A673 (cell line): ENCODE measurements at regions of chr5 and their contacts with region 1.

Region 1: DNA sequence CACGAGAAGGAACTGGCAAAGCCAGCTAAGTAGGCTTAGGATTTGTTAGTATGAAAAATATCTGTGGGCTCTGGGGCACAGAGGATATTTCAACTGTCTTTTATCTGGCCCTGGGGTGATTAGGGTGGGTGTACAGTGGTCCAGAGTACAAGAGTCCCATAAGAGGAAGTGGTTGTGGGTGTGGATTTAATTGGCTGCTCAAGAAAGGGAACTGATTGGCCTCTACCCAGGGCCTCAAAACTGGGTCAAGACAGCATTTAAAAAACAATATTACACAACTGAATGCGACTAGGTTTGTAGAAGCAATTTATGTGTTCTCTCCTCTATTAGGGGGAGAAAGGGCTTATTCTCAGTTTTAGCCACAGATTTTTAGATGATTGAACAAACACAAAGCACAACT is 1353.4 kb upstream of the WWC1 start:
- DNase-seq: no peak
- H3K4me3 ChIP-seq: no peak overlapping the region
- H3K27ac ChIP-seq: no peak overlapping the region
- H3K4me1 ChIP-seq: no peaks in the 10 kb centered on the region
- H3K27me3 ChIP-seq: no peaks in the 10 kb centered on the region
- CTCF ChIP-seq: no peak

Region 2: GRCh38 chr5:166772770-166773169 is 165.3 kb before region 1 on chr5:
- CTCF ChIA-PET with region 1: no interaction called
- POLR2A ChIA-PET with region 1: no interaction called
- intact Hi-C with region 1: no loop called
- DNase-seq: no peak
- H3K4me3 ChIP-seq: no peak overlapping the region
- H3K27ac ChIP-seq: no peak overlapping the region
- H3K4me1 ChIP-seq: no peaks in the 10 kb centered on the region
- H3K27me3 ChIP-seq: no peaks in the 10 kb centered on the region
- CTCF ChIP-seq: no peak

Region 3: GRCh38 chr5:166926138-166926537 is 11.9 kb before region 1 on chr5:
- CTCF ChIA-PET with region 1: no interaction called
- POLR2A ChIA-PET with region 1: interaction called, 16 read pairs
- intact Hi-C with region 1: no loop called
- DNase-seq: peak; percentile 20
- H3K4me3 ChIP-seq: peak overlapping the region; percentile 19
- H3K27ac ChIP-seq: no peak overlapping the region
- H3K4me1 ChIP-seq: no peaks in the 10 kb centered on the region
- H3K27me3 ChIP-seq: peaks cover 7% of the 10 kb centered on the region
- CTCF ChIP-seq: no peak

Region 4: GRCh38 chr5:167592114-167592513 is 654.0 kb after region 1 on chr5:
- CTCF ChIA-PET with region 1: no interaction called
- POLR2A ChIA-PET with region 1: no interaction called
- intact Hi-C with region 1: no loop called
- DNase-seq: no peak
- H3K4me3 ChIP-seq: no peak overlapping the region
- H3K27ac ChIP-seq: no peak overlapping the region
- H3K4me1 ChIP-seq: peaks cover 23% of the 10 kb centered on the region
- H3K27me3 ChIP-seq: no peaks in the 10 kb centered on the region
- CTCF ChIP-seq: no peak